Posterior vena cava (tissue), 2 donors: ENCODE measurements at regions of chr4 and their contacts with region 1.

Region 1: GRCh38 chr4:188130355-188130754 is 8.9 kb upstream of the TRIML1 start:
- DNase-seq: no peak

Region 2: GRCh38 chr4:186283311-186283710 is 1847.0 kb before region 1 on chr4:
- intact Hi-C with region 1: loop called in 1 of 2 experiments (anchors 10 kb)
- DNase-seq: no peak